ENCODE measurements at regions of chr12 and their contacts with region 1.

Region 1: GRCh38 chr12:8823565-8824300 is 1.3 kb downstream of the A2ML1 start:
- DNase-seq: peak in 1 of 2 experiments; percentile 84
- H3K4me3 ChIP-seq: peak overlapping the region; percentile 13 to 49 (median 26); a peak in 6 of 8 replicates
- H3K27ac ChIP-seq: no peak overlapping the region
- H3K4me1 ChIP-seq: peaks cover 5 to 20% (median 14%) of the 10 kb centered on the region in 4 experiments
- H3K27me3 ChIP-seq: no peaks in the 10 kb centered on the region
- CTCF ChIP-seq: peak; percentile 81 to 93 (median 89)
- EP300 ChIP-seq: no peak
- POLR2A ChIP-seq: no peak
- RAD21 ChIP-seq: peak; percentile 99 to 100

Region 2: GRCh38 chr12:8226355-8226754 is 597.4 kb before region 1 on chr12:
- CTCF ChIA-PET with region 1: no interaction called
- POLR2A ChIA-PET with region 1: no interaction called
- DNase-seq: peak in 1 of 2 experiments; percentile 23
- H3K4me3 ChIP-seq: no peak overlapping the region
- H3K27ac ChIP-seq: no peak overlapping the region
- H3K4me1 ChIP-seq: peaks cover 0 to 2% (median 0%) of the 10 kb centered on the region in 4 experiments; a peak in 1 of 7 replicates
- H3K27me3 ChIP-seq: no peaks in the 10 kb centered on the region
- CTCF ChIP-seq: no peak
- EP300 ChIP-seq: no peak
- POLR2A ChIP-seq: no peak
- RAD21 ChIP-seq: no peak

Region 3: GRCh38 chr12:8658346-8658745 is 165.4 kb before region 1 on chr12:
- CTCF ChIA-PET with region 1: interaction called, 65 read pairs
- POLR2A ChIA-PET with region 1: no interaction called
- DNase-seq: no peak
- H3K4me3 ChIP-seq: no peak overlapping the region
- H3K27ac ChIP-seq: no peak overlapping the region
- H3K4me1 ChIP-seq: no peaks in the 10 kb centered on the region; a peak in 1 of 7 replicates
- H3K27me3 ChIP-seq: no peaks in the 10 kb centered on the region
- CTCF ChIP-seq: no peak
- EP300 ChIP-seq: no peak
- POLR2A ChIP-seq: no peak
- RAD21 ChIP-seq: no peak

Region 4: GRCh38 chr12:8681041-8681902 is 142.5 kb before region 1 on chr12:
- CTCF ChIA-PET with region 1: interaction called, 43 read pairs
- POLR2A ChIA-PET with region 1: interaction called, 5 read pairs
- DNase-seq: no peak
- H3K4me3 ChIP-seq: peak overlapping the region in 1 of 4 experiments; percentile 35; a peak in 2 of 8 replicates
- H3K27ac ChIP-seq: no peak overlapping the region
- H3K4me1 ChIP-seq: peaks cover 0 to 15% (median 11%) of the 10 kb centered on the region in 4 experiments; a peak in 6 of 7 replicates
- H3K27me3 ChIP-seq: no peaks in the 10 kb centered on the region
- CTCF ChIP-seq: no peak
- EP300 ChIP-seq: no peak
- POLR2A ChIP-seq: no peak
- RAD21 ChIP-seq: no peak

Region 5: DNA sequence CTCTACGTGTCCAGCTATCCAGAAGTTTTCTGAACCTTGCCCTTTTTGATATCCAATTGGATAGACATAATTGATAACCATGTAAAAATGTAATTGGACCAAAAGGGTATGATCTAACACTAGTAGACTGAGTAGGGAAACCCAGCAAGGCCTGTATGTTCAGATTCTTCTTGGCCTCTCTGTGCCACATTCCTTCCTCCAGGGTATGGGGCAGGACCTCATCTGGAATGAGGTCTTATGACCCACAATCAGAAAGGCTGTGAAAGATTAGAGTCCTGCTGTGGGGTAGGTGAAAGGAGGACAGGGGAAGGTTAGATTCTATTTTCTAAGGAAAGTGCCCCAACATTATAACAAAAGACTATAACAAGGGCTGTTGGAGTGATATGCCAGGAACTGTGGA is 52.7 kb before region 1 on chr12:
- CTCF ChIA-PET with region 1: interaction called, 10 read pairs
- POLR2A ChIA-PET with region 1: no interaction called
- DNase-seq: no peak
- H3K4me3 ChIP-seq: no peak overlapping the region
- H3K27ac ChIP-seq: no peak overlapping the region
- H3K4me1 ChIP-seq: peaks cover 0 to 3% (median 0%) of the 10 kb centered on the region in 4 experiments; a peak in 3 of 7 replicates
- H3K27me3 ChIP-seq: no peaks in the 10 kb centered on the region
- CTCF ChIP-seq: no peak
- EP300 ChIP-seq: no peak
- POLR2A ChIP-seq: no peak
- RAD21 ChIP-seq: no peak

Region 6: DNA sequence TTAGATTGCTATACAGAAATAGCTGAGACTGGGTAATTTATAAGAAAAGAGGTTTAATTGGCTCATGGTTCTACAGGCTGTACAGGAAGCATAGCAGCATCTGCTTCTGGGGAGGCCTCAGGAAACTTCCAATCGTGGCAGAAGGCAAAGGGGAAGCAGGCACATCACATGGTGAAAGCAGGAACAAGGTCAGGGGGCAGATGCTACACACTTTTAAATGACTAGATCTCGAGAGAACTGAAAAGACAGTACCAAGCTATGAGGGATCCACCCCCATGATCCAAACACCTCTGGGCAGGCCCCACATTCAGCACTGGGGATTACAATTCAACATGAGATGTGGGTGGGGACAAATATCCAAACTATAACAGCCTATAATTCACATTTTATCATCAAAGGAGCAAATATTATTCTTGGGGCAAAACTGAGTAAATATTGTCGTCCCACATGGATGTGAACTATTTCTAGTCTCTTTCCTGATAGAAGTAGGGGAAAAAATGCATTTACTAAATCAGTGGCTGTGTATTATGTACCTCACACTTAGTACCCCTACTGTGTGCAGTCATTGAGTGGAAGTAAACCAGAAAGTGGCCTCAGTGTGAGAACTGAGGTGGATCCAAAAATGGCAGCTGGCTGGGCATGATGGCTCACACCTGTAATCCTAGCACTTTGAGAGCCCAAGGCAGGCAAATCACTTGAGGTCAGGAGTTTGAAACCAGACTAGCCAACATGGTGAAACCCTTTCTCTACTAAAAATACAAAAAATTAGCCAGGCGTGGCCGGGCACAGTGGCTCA is 26.7 kb before region 1 on chr12:
- CTCF ChIA-PET with region 1: interaction called, 24 read pairs
- POLR2A ChIA-PET with region 1: interaction called, 211 read pairs
- DNase-seq: peak in 1 of 2 experiments; percentile 50
- H3K4me3 ChIP-seq: no peak overlapping the region
- H3K27ac ChIP-seq: no peak overlapping the region
- H3K4me1 ChIP-seq: peaks cover 0 to 5% (median 0%) of the 10 kb centered on the region in 4 experiments; a peak in 1 of 7 replicates
- H3K27me3 ChIP-seq: no peaks in the 10 kb centered on the region
- CTCF ChIP-seq: no peak
- EP300 ChIP-seq: no peak
- POLR2A ChIP-seq: peak in 1 of 2 experiments; percentile 57
- RAD21 ChIP-seq: no peak

Region 7: GRCh38 chr12:8914716-8915526 is 91.2 kb after region 1 on chr12:
- CTCF ChIA-PET with region 1: interaction called, 6 read pairs
- POLR2A ChIA-PET with region 1: interaction called, 26 read pairs
- DNase-seq: peak in 1 of 2 experiments; percentile 76
- H3K4me3 ChIP-seq: peak overlapping the region; percentile 91 to 99 (median 98)
- H3K27ac ChIP-seq: peak overlapping the region; percentile 65; the same call in 1 of the 2 replicates
- H3K4me1 ChIP-seq: peaks cover 0 to 33% (median 11%) of the 10 kb centered on the region in 4 experiments; a peak in 5 of 7 replicates
- H3K27me3 ChIP-seq: no peaks in the 10 kb centered on the region
- CTCF ChIP-seq: no peak
- EP300 ChIP-seq: no peak
- POLR2A ChIP-seq: 0 out of 3 replicates have a peak, but pooled peaks of 1 of the 2 experiments have one; percentile 42
- RAD21 ChIP-seq: no peak

Measured in H1 (cell line).